ENCODE measurements at regions of chrX and their contacts with region 1.

Region 1: DNA sequence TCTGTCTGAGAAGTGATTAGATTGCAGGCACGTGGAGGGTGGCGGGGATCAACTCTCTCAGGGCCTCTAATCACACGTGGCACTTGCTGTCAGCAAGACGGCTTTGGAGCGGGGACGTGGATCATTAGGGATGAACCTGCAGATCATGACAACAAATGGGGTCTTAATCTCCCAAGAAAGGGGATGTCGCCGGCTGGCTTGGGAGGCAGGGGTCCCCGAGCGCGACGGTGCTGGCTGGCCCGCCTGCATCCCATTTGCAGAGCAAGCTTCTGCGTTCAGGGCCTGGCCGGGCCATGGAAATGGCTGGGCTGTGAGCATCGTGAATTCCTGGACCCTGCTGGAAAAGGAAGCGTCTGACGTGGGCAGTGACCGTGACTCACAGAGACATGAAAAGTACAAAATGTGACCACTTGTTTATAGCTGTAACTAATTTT is 85.1 kb upstream of the SHOX start:
- DNase-seq: no peak
- H3K4me3 ChIP-seq: no peak overlapping the region
- CTCF ChIP-seq: no peak

Region 2: GRCh38 chrX:489820-490219 is 55.6 kb before region 1 on chrX:
- in situ Hi-C with region 1: loop called (anchors 5 kb)
- DNase-seq: no peak
- H3K4me3 ChIP-seq: no peak overlapping the region
- CTCF ChIP-seq: no peak

Region 3: DNA sequence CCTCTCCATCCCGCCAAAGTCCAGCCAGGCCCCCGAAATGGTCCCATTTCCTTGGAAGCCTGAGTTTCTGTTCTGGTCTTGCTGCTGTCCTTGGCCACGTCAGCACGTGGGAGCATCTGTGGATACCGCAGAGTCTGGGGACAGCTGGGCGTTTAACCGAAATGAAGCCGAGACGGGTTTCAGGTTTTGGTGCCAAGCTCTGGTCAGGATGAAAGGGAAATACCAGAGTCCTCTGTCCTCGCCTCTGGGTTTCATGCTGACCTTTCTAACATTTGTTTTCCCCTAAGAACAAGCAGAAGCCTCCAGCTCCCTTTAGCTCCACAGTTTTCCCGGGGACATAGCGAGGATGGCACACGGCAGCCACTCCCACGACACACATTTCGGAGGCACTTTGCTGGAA is 104.9 kb after region 1 on chrX:
- in situ Hi-C with region 1: loop called (anchors 5 kb)
- DNase-seq: no peak
- H3K4me3 ChIP-seq: no peak overlapping the region
- CTCF ChIP-seq: no peak

Measured in astrocyte of the cerebellum (primary cell).